WTC11 (cell line): ENCODE measurements at regions of chr5 and their contacts with region 1.

Region 1: DNA sequence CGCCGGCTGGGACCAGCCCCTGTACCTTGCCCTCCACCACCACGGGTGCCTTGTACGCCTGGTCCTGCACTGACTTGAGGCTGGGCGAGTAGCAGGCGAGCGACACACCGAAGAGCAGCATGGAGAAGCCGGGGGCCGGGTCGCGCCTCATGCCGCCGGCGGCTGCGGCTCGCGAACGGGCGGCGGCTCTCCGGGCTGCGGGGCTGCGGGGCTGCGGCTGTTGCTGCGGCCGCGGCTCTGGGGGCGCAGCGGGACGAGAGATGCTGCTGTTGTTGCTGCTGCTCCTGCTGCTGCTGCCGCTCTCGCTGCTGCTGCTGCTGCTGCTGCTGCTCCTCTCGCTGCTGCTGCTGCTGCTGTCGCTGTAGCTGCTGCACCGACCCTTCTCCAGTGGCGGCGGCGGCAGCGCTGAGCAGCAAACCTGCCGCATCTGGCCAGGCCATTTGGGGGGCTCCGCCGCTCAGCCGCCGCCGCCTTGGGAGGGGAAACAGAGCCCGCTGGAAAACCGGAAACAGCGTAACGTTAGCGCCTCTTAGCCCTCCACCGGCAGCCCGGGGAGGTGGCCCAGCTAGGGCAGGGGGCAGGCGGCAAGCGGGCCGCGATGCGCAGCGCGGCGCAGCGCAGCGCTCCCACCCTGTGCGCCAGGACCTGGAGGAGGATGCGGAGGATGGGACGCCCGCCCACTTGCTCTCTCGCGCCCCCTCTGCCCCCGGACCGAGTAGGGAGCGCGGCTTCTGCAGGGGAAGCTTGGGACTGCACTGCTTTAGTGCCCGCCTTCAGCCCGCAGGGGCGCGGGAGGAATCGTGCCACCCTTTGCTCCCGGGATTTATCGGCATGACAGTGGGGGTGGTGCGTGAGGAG is at the start of gene NRG2:
- DNase-seq: peak; percentile 88
- ATAC-seq: peak; percentile 89
- H3K4me3 Mint-ChIP-seq: peak within 1 kb of the TSS; percentile 70
- H3K27ac Mint-ChIP-seq: no peak within 1 kb of the TSS
- H3K4me1 Mint-ChIP-seq: peaks cover 28% of the 10 kb centered on the region
- H3K27me3 Mint-ChIP-seq: peaks cover 86% of the 10 kb centered on the region
- CTCF ChIP-seq: no peak
- total RNA-seq, gene NRG2: 0.44 to 0.73 TPM (median 0.46 TPM) in 3 replicates

Region 2: DNA sequence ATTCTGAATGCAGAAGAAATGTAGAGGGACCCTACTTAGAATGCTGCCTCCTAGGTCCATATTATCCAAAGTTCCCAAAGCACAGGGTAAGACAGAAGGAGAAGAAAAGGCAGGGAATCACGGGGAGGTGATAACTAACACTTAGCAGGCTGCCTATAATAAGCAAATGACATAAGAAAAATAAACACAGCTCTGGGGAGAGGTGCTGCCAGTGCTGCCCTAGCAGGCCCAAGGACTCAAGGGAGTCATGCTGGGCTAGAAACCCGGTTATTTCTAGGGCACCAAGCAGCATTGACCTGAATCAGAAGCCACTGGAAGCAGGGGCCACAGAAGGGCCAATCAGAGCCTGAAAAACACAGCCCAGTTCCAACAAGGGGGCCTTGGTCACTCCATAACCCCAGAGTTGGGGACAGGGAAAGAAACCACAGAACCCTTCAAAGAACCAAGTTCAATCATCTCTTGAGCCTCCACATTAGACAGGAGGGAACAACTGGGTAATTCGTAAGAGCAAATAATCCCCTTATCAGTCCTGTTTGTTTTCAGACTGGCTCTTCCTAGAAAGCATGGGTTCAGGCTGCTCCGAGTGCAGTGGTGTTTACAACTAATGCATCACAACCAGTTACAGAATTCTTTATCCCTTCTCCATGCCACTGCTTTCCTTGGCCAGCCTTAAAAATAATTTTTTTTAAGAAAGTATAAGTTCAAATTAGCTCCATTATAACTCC is 23.8 kb before region 1 on chr5:
- CTCF ChIA-PET with region 1: no interaction called
- POLR2A ChIA-PET with region 1: no interaction called
- DNase-seq: no peak
- ATAC-seq: no peak
- H3K4me3 Mint-ChIP-seq: no peak overlapping the region
- H3K27ac Mint-ChIP-seq: no peak overlapping the region
- H3K4me1 Mint-ChIP-seq: no peaks in the 10 kb centered on the region
- H3K27me3 Mint-ChIP-seq: peaks cover 5% of the 10 kb centered on the region
- CTCF ChIP-seq: no peak

Region 3: GRCh38 chr5:140054086-140054689 is 11.3 kb after region 1 on chr5:
- CTCF ChIA-PET with region 1: interaction called, 10 read pairs
- POLR2A ChIA-PET with region 1: interaction called, 4 read pairs
- DNase-seq: no peak
- ATAC-seq: no peak
- H3K4me3 Mint-ChIP-seq: no peak overlapping the region
- H3K27ac Mint-ChIP-seq: no peak overlapping the region
- H3K4me1 Mint-ChIP-seq: no peaks in the 10 kb centered on the region
- H3K27me3 Mint-ChIP-seq: peaks cover 11% of the 10 kb centered on the region
- CTCF ChIP-seq: no peak